ENCODE measurements at regions of chr2 and their contacts with region 1.

Region 1: DNA sequence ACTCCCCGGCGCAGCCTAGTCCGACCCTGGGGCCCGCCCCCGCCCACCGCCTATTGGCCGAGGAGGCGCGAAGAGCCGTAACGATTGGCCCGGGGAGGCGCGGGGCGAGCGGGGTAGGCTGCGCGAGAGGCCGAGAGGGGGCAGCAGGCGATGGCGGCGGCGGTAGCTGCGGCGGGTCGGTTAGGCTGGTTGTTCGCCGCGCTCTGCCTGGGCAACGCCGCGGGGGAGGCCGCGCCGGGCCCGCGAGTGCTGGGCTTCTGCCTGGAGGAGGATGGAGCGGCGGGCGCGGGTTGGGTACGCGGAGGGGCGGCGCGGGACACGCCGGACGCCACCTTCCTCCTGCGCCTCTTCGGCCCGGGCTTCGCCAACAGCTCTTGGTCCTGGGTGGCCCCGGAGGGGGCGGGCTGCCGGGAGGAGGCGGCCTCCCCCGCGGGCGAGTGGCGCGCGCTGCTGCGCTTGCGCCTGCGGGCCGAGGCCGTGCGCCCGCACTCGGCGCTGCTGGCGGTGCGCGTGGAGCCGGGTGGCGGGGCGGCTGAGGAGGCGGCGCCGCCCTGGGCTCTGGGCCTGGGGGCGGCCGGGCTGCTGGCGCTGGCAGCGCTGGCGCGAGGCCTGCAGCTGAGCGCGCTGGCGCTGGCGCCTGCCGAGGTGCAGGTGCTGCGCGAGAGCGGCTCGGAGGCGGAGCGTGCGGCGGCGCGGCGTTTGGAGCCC is at the start of gene CNNM3:
- DNase-seq: peak; percentile 98
- H3K4me3 ChIP-seq: peak within 1 kb of the TSS; percentile 60 to 88 (median 68)
- H3K27ac ChIP-seq: peak within 1 kb of the TSS; percentile 85 to 96 (median 96)
- H3K4me1 ChIP-seq: peaks cover 0 to 55% (median 45%) of the 10 kb centered on the region in 4 donors
- H3K27me3 ChIP-seq: no peaks in the 10 kb centered on the region
- CTCF ChIP-seq: peak; percentile 31 to 77 (median 63)
- EP300 ChIP-seq: no peak
- POLR2A ChIP-seq: peak in 1 of 2 donors; percentile 46
- total RNA-seq, gene CNNM3: 8.9 to 16.6 (median 11.8) TPM

Region 2: GRCh38 chr2:96638144-96639121 is 177.8 kb before region 1 on chr2 and contains the start of gene KANSL3:
- intact Hi-C with region 1: loop called (anchors 10 kb)
- DNase-seq: peak; percentile 96
- H3K4me3 ChIP-seq: peak within 1 kb of the TSS; percentile 65 to 76 (median 72)
- H3K27ac ChIP-seq: peak within 1 kb of the TSS; percentile 92 to 98 (median 92)
- H3K4me1 ChIP-seq: peaks cover 3 to 38% (median 29%) of the 10 kb centered on the region in 4 donors
- H3K27me3 ChIP-seq: no peaks in the 10 kb centered on the region
- CTCF ChIP-seq: no peak
- EP300 ChIP-seq: peak in 1 of 4 donors; percentile 63
- POLR2A ChIP-seq: peak; percentile 76 to 85
- total RNA-seq, gene KANSL3: 35.4 to 55.0 (median 47.7) TPM

Region 3: DNA sequence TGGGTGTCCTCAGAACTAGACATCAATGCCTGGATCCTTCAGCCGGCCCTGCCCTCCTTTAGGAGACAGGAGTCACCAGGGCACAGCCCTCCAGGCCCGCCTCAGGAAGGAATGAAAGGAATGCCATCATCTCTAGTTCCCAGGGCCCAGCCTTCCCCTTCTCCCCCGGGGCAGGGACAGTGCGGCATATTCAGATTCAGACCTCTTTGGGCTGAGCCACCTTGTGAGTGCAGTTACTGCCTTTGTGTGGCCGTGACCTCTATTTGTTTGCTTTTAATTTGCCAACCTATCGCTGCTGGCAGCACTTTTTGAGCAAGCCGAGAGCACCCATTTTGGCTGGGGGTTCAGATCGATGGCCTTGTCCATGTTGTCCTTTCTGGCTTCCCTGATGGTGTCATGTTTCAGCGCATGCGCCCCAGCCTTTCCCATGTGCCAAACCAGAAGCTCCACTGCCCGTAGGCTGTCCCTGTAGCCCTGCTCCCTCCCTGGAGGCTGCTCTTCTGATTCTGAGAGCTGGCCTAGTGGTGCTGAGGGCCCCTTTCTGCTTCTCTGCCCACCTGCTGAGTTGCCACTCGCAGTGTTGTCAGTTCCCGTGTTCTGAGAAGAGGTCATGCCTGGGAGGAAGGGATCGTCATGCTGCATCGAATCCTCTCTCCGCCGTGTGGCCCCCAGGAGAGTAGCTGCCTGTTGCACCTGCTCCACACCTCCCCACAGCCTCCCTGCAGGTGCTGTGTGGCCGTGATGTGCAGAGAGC is 16.6 kb after region 1 on chr2:
- intact Hi-C with region 1: no loop called
- DNase-seq: peak; percentile 81
- H3K4me3 ChIP-seq: no peak overlapping the region
- H3K27ac ChIP-seq: peak overlapping the region; percentile 47 to 60 (median 53)
- H3K4me1 ChIP-seq: peaks cover 0 to 17% (median 15%) of the 10 kb centered on the region in 4 donors
- H3K27me3 ChIP-seq: no peaks in the 10 kb centered on the region
- CTCF ChIP-seq: no peak
- EP300 ChIP-seq: no peak
- POLR2A ChIP-seq: no peak

Region 4: DNA sequence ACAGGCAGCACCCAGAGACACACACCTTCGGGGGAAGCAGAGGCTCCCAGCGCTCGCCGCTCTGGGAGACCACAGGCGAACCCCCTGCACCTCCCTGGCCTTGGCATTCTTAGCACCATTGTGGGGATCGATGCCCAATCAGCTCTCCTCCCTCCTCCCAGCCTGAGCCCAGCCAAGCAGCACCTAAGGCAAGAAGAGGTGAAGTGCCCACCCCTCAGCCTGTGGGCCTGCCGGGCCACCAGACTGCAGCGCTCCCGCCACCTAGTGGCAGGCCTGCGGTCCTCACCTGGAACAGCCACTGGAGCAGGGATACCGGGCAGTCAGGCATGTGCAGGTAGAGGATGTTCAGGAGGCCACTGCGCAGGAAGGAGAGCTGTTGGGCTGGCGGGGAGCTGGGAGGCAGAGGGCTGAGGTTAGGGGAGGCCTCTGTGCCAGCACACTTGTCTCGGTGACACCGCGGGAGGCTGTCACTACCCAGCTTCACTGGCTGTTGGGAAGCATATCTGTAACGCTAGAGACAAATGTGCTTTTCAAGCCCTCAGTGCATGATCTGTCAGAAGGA is 134.9 kb after region 1 on chr2:
- intact Hi-C with region 1: loop called (anchors 2 kb)
- DNase-seq: peak; percentile 87
- H3K4me3 ChIP-seq: no peak overlapping the region
- H3K27ac ChIP-seq: peak overlapping the region; percentile 72 to 88 (median 82)
- H3K4me1 ChIP-seq: peaks cover 0 to 62% (median 55%) of the 10 kb centered on the region in 4 donors
- H3K27me3 ChIP-seq: no peaks in the 10 kb centered on the region
- CTCF ChIP-seq: peak; percentile 93 to 98 (median 96)
- EP300 ChIP-seq: no peak
- POLR2A ChIP-seq: no peak

Measured in sigmoid colon (tissue), 7 donors.